ENCODE measurements at regions of chr3 and their contacts with region 1.

Region 1: DNA sequence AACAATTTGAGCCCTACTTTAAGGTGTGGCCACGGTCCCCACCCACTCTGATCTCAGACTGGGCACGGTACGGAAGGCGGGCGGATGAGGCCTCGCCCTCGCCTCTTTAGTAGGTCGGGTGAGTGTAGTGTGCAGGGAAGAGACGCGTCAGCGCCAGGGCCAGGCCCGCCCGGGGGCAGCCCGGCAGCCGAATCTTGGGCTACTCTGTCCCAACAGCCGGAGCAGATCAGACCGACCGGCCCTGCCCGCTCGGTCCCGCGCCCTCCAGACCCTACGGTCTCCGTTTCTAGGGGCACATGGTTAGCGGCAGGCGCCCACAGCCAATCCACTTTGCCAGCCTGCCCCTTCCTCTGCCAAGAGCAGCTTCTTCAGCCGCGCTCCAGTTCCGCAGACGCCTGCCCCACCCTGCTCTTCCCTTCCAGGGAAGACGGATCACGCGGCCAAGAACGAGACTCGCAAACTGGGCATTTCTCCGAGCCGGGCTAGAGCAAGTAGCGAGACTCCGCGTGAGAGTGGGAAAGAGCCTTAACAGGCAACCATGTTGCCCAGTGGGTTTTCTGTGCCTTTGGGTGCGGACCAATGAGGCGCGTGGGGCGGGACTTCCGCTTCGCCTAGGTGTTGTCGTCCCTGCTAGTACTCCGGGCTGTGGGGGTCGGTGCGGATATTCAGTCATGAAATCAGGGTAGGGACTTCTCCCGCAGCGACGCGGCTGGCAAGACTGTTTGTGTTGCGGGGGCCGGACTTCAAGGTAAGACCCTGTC is at the start of gene RNF13:
- DNase-seq: peak; percentile 98
- ATAC-seq: peak; percentile 92 to 95 (median 94)
- H3K4me3 ChIP-seq: peak within 1 kb of the TSS; percentile 95
- H3K27ac ChIP-seq: peak within 1 kb of the TSS; percentile 100
- H3K4me1 ChIP-seq: peaks cover 45% of the 10 kb centered on the region
- H3K27me3 ChIP-seq: no peaks in the 10 kb centered on the region
- CTCF ChIP-seq: no peak
- total RNA-seq, gene RNF13: 39.8 to 51.0 (median 43.9) TPM

Region 2: DNA sequence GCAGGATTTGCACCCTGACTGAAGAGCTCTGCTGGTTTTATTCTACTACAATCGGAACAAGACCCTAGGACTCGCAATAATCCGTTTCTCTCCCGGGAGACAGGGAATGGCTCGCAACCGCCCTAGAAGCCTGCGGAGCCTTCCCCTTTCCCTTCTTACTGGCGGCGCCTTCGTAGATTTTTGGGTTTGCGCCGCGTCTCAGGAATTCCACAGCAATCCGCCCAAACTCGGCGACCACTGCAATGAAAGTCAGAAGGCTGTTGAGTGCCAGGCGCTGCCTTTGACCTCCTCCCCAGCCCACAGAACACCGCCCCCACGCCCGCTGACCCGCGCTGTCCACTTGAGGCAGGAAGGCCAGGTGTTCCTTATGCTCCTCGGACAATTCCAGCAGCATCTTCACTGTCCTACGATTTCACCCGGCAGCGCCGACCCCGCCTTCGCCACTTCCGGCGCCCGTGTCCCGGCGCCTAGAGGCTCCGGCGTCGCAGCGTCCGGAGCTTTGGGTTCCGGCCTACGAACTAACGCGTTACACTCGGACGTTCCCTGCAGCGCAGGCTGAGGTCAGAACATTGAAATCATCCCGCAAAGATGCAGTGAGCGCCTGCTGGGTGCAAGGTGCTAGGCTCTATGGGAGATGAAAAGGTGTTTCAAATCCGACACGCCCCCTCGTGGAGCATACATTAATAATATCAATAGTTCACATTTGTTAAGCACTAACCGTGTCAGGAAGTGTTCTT is 60.6 kb before region 1 on chr3 and contains the start of gene COMMD2:
- intact Hi-C with region 1: loop called in 1 of 2 experiments (anchors 5 kb)
- DNase-seq: peak; percentile 72 to 84
- ATAC-seq: peak; percentile 97 to 100 (median 98)
- H3K4me3 ChIP-seq: peak within 1 kb of the TSS; percentile 83
- H3K27ac ChIP-seq: peak within 1 kb of the TSS; percentile 77
- H3K4me1 ChIP-seq: peaks cover 11% of the 10 kb centered on the region
- H3K27me3 ChIP-seq: no peaks in the 10 kb centered on the region
- CTCF ChIP-seq: peak; percentile 30
- total RNA-seq, gene COMMD2: 11.6 to 22.8 (median 15.1) TPM

Region 3: DNA sequence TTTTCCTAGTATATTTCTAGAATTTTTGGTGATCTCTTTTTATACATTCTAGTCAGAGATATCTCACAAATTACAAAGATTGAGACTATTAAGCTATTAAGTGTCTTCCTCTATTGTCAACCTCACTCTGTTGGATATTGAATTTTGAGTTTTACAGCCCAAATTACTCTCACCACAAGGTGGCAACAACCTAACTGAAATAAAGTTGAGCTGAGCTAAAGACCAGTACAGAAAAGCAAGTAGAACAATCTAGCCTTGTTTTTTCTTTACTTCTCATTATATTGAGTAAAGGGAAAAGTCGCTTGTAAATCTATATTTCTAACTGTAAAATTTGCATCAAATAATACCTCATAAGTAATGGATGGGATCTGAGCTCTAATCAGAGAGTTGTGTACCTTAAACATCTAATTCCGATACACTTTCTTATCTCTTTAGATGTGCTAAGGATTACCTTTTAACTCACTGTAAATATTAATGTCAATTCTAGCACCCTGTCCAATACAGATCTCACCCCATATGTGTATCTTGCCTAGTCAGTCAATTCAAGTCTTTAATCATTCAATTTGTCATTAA is 46.9 kb before region 1 on chr3:
- intact Hi-C with region 1: loop called in 1 of 2 experiments (anchors 5 kb)
- DNase-seq: no peak
- ATAC-seq: no peak
- H3K4me3 ChIP-seq: no peak overlapping the region
- H3K27ac ChIP-seq: no peak overlapping the region
- H3K4me1 ChIP-seq: no peaks in the 10 kb centered on the region
- H3K27me3 ChIP-seq: peaks cover 0 to 12% (median 3%) of the 10 kb centered on the region in 3 donors
- CTCF ChIP-seq: peak; percentile 28

Measured in psoas muscle (tissue), 8 donors.